Motor neuron (in vitro differentiated cells): ENCODE measurements at regions of chr5 and their contacts with region 1.

Region 1: DNA sequence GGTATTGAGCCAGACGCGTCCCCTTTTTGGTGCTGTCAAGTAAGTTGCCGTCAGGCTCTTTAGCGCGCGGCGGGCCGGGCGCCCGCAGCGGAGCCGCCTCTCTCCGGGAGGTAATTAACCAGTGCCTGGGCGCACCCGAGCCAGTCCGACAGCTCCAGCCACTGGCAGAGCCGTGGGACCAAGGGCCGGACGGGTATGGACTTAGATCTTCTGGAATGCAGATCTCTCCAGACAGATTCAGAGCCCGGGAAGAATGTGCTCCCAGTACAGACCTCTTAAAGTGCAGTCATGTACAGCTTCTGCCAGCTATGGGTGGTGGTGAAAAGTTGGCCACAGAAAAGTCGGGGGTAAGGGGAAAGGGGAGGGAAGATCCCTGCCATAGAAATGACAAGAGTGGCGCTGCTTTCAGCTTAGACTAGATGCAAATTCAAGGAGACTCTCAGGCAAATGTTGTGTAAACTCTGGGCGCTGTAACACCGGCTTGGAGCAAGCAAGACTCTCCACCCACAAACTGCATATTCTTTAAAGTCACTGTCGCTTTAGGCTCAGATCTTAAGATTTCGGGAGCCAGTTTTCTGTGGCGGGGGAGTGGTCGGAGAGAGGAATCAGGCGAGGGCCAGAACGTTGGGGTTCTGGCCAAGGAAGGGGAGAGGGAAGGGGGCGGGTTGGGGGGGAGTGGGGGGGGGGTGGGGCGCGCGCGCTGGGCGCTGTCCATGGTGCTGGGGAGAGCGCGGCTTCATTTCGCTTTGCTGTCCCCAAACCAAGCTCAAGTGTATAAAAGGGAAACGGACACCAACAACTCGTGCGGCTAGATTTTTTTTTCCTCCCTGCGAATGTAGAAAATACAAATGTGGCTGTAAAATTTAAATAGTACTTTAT is 29.2 kb downstream of the NR2F1 start:
- ATAC-seq: peak in 7 of 8 experiments; percentile 51 to 71 (median 65)
- H3K4me3 ChIP-seq: peak overlapping the region; percentile 12 to 27 (median 23)
- H3K27ac ChIP-seq: no peak overlapping the region
- H3K4me1 ChIP-seq: peaks cover 20 to 59% of the 10 kb centered on the region in 2 donors

Region 2: DNA sequence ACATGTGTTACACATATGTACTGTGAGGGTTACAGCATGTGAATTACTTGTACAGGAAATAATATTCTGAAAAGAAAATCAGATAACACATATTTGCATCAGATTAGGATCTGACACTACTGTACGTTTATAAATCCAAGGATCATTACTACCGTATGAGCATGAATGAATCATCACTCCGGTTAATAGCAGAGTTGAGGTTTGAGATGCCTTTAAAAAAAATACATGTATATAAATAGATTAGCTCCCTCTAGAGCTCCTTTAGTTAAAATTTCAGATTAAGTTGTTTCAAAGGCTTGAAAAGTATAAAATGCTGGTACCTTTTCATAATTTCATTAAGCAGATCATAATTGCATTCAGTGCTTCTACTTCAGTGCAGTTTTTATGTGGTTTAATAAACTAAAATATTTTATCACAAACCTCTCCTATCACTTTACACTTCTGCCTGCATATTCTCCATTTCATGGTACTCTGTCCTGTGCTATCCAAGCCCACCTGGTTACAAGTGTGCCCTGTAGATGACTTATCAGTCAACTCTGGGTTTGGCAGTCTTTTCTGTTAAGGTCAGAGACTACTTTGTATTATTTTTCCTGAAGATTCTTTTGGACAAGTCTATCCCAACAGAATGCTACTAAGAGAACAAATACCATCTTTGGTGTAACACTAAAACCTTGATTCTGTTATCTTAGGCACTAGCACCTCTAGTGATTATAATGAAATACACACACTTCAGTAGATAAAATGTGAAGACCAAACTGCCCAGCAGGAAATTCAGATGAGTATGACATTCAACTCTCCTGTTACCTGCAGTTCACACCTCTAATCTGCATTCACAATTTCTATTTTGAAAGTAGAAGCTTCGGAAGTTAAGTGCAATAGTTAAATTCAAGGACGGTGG is 177.2 kb after region 1 on chr5:
- in situ Hi-C with region 1: loop called in 7 of 9 experiments (anchors 10 to 25 kb)
- ATAC-seq: peak in 7 of 8 experiments; percentile 41 to 93 (median 66)
- H3K4me3 ChIP-seq: no peak overlapping the region
- H3K27ac ChIP-seq: no peak overlapping the region
- H3K4me1 ChIP-seq: no peaks in the 10 kb centered on the region

Region 3: GRCh38 chr5:93954421-93955069 is 342.3 kb after region 1 on chr5:
- in situ Hi-C with region 1: no loop called
- ATAC-seq: no peak
- H3K4me3 ChIP-seq: no peak overlapping the region
- H3K27ac ChIP-seq: no peak overlapping the region
- H3K4me1 ChIP-seq: no peaks in the 10 kb centered on the region